Left ventricle myocardium superior (tissue), 1 donor: ENCODE measurements at regions of chrX and their contacts with region 1.

Region 1: GRCh38 chrX:121579016-121579760 is 531.8 kb downstream of the GLUD2 start:
- DNase-seq: no peak
- ATAC-seq: no peak

Region 2: DNA sequence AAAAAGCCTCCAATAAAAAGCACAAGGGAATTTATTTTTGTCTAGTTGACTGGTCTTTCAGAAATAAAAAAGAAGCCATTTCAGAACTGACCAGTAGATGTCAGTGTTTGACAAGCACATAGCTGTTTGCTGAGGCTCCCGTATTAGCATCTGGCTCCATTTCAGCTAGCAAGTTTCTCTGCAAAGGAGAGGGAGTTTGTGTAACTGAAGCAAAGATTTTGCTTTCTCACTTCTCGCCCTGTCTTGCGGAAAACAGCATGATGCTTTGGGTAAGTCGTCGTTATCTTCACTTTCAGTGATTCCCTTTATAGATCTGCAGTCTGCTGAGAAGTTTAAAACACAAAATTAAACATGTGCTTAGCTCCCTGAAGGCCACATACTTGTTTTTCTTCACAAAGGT is 789.1 kb before region 1 on chrX:
- intact Hi-C with region 1: loop called (anchors 10 kb)
- DNase-seq: no peak
- ATAC-seq: peak; percentile 73